ENCODE measurements at regions of chr2 and their contacts with region 1.

Region 1: GRCh38 chr2:204691911-204692510 is 146.7 kb downstream of the PARD3B start:
- DNase-seq: peak in 4 of 5 donors; percentile 31 to 81 (median 61)
- H3K4me3 ChIP-seq: no peak overlapping the region
- H3K27ac ChIP-seq: no peak overlapping the region
- H3K4me1 ChIP-seq: no peaks in the 10 kb centered on the region
- H3K27me3 ChIP-seq: no peaks in the 10 kb centered on the region
- CTCF ChIP-seq: peak; percentile 55 to 74 (median 72)
- EP300 ChIP-seq: no peak
- POLR2A ChIP-seq: no peak

Region 2: DNA sequence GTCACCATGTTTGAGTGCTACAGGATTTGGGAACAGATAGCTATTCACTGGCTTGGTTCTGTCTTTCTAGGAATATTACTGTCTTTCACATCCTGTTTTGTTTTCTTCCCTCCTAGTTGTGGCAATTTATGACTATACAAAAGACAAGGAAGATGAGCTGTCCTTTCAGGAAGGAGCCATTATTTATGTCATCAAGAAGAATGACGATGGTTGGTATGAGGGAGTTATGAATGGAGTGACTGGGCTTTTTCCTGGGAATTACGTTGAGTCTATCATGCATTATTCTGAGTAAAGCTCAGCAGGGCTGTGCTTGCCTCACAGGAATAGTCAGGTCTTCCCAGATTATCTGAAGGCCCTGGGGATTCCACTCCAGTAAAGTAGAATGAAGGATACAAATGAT is 1265.0 kb before region 1 on chr2:
- intact Hi-C with region 1: loop called in 1 of 4 experiments (anchors 5 kb)
- DNase-seq: no peak
- H3K4me3 ChIP-seq: no peak overlapping the region
- H3K27ac ChIP-seq: no peak overlapping the region
- H3K4me1 ChIP-seq: no peaks in the 10 kb centered on the region
- H3K27me3 ChIP-seq: no peaks in the 10 kb centered on the region
- CTCF ChIP-seq: no peak
- EP300 ChIP-seq: no peak
- POLR2A ChIP-seq: no peak

Region 3: GRCh38 chr2:204325468-204325867 is 366.5 kb before region 1 on chr2:
- intact Hi-C with region 1: loop called in 2 of 4 experiments (anchors 5 to 10 kb)
- DNase-seq: peak in 4 of 5 donors; percentile 52 to 72 (median 58)
- H3K4me3 ChIP-seq: no peak overlapping the region
- H3K27ac ChIP-seq: no peak overlapping the region
- H3K4me1 ChIP-seq: no peaks in the 10 kb centered on the region
- H3K27me3 ChIP-seq: no peaks in the 10 kb centered on the region
- CTCF ChIP-seq: peak; percentile 65 to 83 (median 73)
- EP300 ChIP-seq: no peak
- POLR2A ChIP-seq: no peak

Region 4: DNA sequence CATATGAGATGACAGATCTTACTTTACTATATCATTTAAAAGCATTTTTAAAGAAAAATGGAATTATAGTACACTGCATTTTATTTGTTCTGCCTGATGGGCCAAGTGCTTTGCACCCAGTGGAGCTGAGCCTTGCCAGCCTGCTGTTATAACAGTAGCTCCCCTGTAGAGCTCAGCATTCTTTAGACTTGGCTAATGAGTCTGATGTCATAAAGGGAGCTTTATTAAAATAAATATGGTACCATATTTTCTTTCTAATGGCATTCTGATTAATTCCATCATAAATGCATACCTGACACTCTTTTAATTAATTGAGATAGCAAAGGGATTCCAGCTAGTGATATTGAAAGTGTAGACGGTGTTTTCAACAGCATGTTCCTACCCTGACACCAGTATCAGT is 106.1 kb before region 1 on chr2:
- intact Hi-C with region 1: no loop called
- DNase-seq: no peak
- H3K4me3 ChIP-seq: no peak overlapping the region
- H3K27ac ChIP-seq: no peak overlapping the region
- H3K4me1 ChIP-seq: no peaks in the 10 kb centered on the region
- H3K27me3 ChIP-seq: no peaks in the 10 kb centered on the region
- CTCF ChIP-seq: no peak
- EP300 ChIP-seq: no peak
- POLR2A ChIP-seq: no peak

Region 5: DNA sequence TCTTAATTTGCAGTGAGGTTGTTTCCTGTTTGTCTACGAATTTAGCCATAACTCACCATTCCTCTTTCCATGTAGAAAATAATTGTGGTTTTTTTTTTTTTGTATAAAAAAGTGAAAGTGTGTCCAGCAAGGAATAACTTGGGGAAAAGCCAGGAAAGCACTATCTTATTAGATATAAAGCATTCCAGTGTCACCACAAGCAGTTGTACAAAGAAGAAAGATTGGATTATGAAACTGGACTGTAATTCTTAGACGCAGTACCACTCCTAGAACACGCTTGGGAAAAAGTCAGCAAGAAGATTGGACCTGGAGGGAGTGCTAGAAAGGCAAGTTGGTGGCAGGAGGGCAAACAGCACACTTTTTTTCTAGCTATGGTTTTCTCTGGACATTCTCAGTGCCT is 40.0 kb after region 1 on chr2:
- intact Hi-C with region 1: no loop called
- DNase-seq: no peak
- H3K4me3 ChIP-seq: no peak overlapping the region
- H3K27ac ChIP-seq: no peak overlapping the region
- H3K4me1 ChIP-seq: peaks cover 3% of the 10 kb centered on the region
- H3K27me3 ChIP-seq: no peaks in the 10 kb centered on the region
- CTCF ChIP-seq: no peak
- EP300 ChIP-seq: no peak
- POLR2A ChIP-seq: no peak

Region 6: DNA sequence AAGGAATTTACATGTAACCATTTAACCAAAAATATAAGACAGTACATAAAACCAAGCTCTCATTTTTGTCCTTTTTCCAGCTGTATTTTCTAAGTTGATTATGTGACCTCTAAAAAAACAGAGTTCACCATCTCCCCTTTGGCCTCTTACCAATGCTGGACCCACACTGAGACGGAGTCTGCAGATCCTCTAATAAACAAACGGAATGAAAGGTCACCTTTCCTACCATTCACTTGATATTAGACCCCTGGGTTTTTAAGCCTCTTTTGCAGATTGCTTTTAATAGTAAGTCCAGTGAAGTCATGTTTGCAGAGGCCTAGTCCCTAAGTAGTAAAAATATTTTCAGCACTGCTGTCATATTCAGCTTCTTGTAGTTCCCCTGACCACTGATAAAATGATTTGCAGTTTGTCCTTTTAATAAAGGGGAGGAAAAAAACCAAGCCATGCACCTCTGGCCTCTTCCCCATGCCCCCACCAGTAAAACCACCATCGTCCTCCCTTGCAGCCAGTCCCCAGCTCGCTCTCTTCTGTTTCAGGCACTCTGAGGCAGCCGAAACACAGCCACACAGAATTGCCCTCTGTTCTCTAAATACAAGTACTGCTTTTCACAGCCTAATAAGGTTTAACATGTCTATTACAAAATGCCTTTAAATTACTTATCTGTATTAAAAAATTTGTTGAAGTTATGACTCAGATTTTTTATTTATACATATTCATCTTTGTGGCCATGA is 280.8 kb after region 1 on chr2:
- intact Hi-C with region 1: no loop called
- DNase-seq: no peak
- H3K4me3 ChIP-seq: no peak overlapping the region
- H3K27ac ChIP-seq: no peak overlapping the region
- H3K4me1 ChIP-seq: peaks cover 1% of the 10 kb centered on the region
- H3K27me3 ChIP-seq: no peaks in the 10 kb centered on the region
- CTCF ChIP-seq: no peak
- EP300 ChIP-seq: no peak
- POLR2A ChIP-seq: no peak

Region 7: GRCh38 chr2:205259121-205259520 is 567.1 kb after region 1 on chr2:
- intact Hi-C with region 1: no loop called
- DNase-seq: no peak
- H3K4me3 ChIP-seq: no peak overlapping the region
- H3K27ac ChIP-seq: no peak overlapping the region
- H3K4me1 ChIP-seq: no peaks in the 10 kb centered on the region
- H3K27me3 ChIP-seq: no peaks in the 10 kb centered on the region
- CTCF ChIP-seq: no peak
- EP300 ChIP-seq: no peak
- POLR2A ChIP-seq: no peak